ENCODE measurements at regions of chr1 and their contacts with region 1.

Region 1: GRCh38 chr1:111592389-111593361 is 26.9 kb upstream of the RAP1A start:
- DNase-seq: peak; percentile 89 to 94 (median 90)
- ATAC-seq: peak; percentile 93 to 96 (median 94)
- H3K4me3 ChIP-seq: peak overlapping the region in 9 of 12 donors; percentile 3 to 26 (median 9)
- H3K27ac ChIP-seq: peak overlapping the region; percentile 80 to 92 (median 82)
- H3K4me1 ChIP-seq: peaks cover 11 to 56% (median 30%) of the 10 kb centered on the region in 12 donors
- H3K27me3 ChIP-seq: no peaks in the 10 kb centered on the region
- CTCF ChIP-seq: no peak
- POLR2A ChIP-seq: no peak

Region 2: DNA sequence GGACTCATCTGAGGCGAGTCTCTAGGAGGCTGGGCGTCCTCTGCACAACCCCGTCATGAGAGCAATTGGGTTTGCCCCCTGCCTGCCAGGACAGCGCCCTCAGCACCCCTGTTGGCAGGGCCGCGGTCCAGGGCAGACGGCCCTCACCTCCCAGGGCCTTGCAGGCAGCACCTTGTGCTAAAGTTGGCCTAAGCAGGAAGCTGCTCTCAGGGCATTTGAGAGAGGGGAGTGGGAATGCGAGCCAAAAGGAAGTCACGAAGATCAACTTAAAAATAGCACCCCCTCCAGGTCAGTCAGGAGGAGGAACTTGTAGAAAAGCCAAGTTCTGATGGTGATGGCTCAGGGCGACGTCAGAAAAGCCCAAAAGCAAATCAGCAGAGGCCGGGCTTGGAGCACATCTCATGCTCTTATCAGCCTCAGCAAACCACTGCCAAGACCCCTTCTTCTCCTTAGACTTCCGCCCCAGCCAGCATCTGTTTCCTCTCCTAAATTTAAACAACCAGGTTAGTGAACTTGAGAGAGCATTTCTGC is 76.6 kb before region 1 on chr1:
- intact Hi-C with region 1: loop called in 5 of 10 experiments (anchors 1 to 10 kb)
- DNase-seq: peak in 4 of 5 donors; percentile 78 to 89 (median 80)
- ATAC-seq: peak; percentile 62 to 84 (median 80)
- H3K4me3 ChIP-seq: peak overlapping the region in 11 of 12 donors; percentile 28 to 58 (median 49)
- H3K27ac ChIP-seq: peak overlapping the region; percentile 66 to 96 (median 90)
- H3K4me1 ChIP-seq: peaks cover 2 to 74% (median 35%) of the 10 kb centered on the region in 12 donors
- H3K27me3 ChIP-seq: no peaks in the 10 kb centered on the region
- CTCF ChIP-seq: peak; percentile 13 to 60 (median 38)
- POLR2A ChIP-seq: no peak

Region 3: GRCh38 chr1:111619635-111620440 is 27.2 kb after region 1 on chr1 and contains the start of gene RAP1A:
- intact Hi-C with region 1: loop called in 4 of 10 experiments (anchors 1 to 2 kb)
- DNase-seq: peak; percentile 96 to 98 (median 97)
- ATAC-seq: peak; percentile 96 to 98 (median 97)
- H3K4me3 ChIP-seq: peak within 1 kb of the TSS; percentile 61 to 95 (median 82)
- H3K27ac ChIP-seq: peak within 1 kb of the TSS; percentile 94 to 98 (median 98)
- H3K4me1 ChIP-seq: peaks cover 0 to 83% (median 34%) of the 10 kb centered on the region in 12 donors
- H3K27me3 ChIP-seq: no peaks in the 10 kb centered on the region
- CTCF ChIP-seq: no peak
- POLR2A ChIP-seq: peak in 1 of 2 donors; percentile 79
- total RNA-seq, gene RAP1A: 52.6 to 134 (median 99.1) TPM

Region 4: DNA sequence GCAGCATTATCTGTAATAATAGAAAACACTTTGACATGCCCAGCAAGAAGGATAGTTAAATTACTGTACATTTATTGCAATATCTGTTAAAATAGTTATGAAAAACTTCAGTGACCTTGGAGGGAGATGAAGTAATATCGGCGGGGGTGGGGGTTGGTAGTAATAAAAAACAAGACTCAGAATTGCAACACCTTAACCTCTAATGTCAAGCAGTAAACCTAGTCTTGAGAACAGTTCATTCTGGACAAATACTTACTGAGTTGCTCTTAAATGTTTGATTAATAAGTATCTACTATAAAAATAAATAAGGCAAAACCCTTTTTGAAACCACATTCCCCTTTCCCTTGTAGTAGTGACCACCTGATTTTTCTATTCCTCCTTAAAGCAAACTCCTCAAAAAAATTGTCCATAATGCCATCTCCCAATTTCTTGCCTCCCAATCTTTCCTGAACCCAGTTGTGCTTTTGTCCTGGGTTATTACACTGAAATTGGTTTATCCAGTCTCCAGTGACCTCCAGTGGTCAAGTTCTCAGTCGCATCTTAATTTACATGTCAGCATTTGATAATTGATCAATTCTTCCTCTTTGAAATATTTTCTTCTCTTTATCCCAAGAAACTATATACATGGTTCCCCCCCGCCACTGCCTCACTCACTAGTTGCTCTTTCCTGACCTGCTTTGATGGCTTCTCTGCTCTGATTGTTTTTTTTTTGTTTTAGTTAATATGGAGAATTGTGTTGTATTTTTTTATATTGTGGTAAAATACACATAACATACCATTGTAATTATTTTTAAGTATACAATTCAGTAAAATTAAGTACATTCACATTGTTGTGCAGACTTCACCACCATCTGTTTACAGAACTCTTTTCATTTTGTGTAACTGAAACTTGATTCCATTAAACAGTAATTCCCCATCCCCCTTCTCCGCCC is 63.7 kb after region 1 on chr1:
- intact Hi-C with region 1: loop called in 1 of 10 experiments (anchors 5 kb)
- DNase-seq: no peak
- ATAC-seq: peak; percentile 19 to 73 (median 56)
- H3K4me3 ChIP-seq: no peak overlapping the region
- H3K27ac ChIP-seq: peak overlapping the region in 2 of 12 donors; percentile 3 to 40
- H3K4me1 ChIP-seq: peaks cover 0 to 67% (median 25%) of the 10 kb centered on the region in 12 donors
- H3K27me3 ChIP-seq: no peaks in the 10 kb centered on the region
- CTCF ChIP-seq: peak; percentile 42 to 82 (median 68)
- POLR2A ChIP-seq: no peak

Measured in heart left ventricle (tissue), 16 donors.